ENCODE measurements at regions of chr1 and their contacts with region 1.

Region 1: GRCh38 chr1:191788551-191788950 is 369.7 kb upstream of the RGS18 start:
- DNase-seq: no peak
- H3K4me3 ChIP-seq: no peak overlapping the region
- H3K27ac ChIP-seq: no peak overlapping the region
- H3K4me1 ChIP-seq: no peaks in the 10 kb centered on the region
- H3K27me3 ChIP-seq: no peaks in the 10 kb centered on the region
- CTCF ChIP-seq: no peak
- EP300 ChIP-seq: no peak
- POLR2A ChIP-seq: no peak

Region 2: DNA sequence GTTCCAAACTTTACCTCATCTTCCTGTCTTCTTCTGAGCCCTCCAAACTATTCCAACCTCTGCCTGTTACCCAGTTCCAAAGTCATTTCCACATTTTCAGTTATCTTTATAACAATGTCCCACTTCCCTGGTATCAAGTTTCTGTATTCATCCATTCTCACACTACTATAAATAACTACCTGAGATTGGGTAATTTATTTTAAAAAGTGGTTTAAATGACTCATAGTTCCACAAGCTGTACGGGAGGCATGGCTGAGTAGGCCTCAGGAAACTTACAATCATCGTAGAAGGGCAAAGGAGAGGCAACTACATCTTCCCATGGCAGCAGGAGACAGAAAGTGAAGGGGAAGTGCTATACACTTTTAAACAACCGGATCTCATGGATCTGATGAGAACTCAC is 58.8 kb before region 1 on chr1:
- in situ Hi-C with region 1: loop called in 1 of 4 experiments (anchors 10 kb)
- intact Hi-C with region 1: no loop called
- DNase-seq: no peak
- H3K4me3 ChIP-seq: no peak overlapping the region
- H3K27ac ChIP-seq: no peak overlapping the region
- H3K4me1 ChIP-seq: no peaks in the 10 kb centered on the region
- H3K27me3 ChIP-seq: no peaks in the 10 kb centered on the region
- CTCF ChIP-seq: no peak
- EP300 ChIP-seq: no peak
- POLR2A ChIP-seq: no peak

Region 3: GRCh38 chr1:191929383-191929782 is 140.8 kb after region 1 on chr1:
- in situ Hi-C with region 1: no loop called
- intact Hi-C with region 1: no loop called
- DNase-seq: no peak
- H3K4me3 ChIP-seq: no peak overlapping the region
- H3K27ac ChIP-seq: no peak overlapping the region
- H3K4me1 ChIP-seq: no peaks in the 10 kb centered on the region
- H3K27me3 ChIP-seq: no peaks in the 10 kb centered on the region
- CTCF ChIP-seq: no peak
- EP300 ChIP-seq: no peak
- POLR2A ChIP-seq: no peak

Region 4: DNA sequence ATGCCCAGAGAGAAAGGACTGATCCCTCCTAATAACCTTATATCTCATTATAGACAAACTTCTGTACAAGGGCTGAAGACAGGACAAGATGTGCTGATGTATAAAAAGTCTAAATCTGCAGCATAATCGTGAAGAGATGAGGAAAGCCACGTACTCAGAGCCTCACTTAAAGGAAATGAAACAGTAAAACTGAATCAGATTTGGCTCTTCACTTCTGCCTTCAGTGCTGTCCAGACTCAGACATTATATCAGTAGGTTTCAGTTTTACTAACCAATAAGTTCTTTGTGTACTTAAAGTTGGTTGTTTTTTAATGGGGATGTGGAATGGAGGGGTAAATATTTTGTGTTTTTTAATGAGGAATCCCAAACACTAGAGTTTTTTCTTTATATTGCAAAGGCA is 741.7 kb after region 1 on chr1:
- in situ Hi-C with region 1: no loop called
- intact Hi-C with region 1: loop called (anchors 5 kb)
- DNase-seq: no peak
- H3K4me3 ChIP-seq: no peak overlapping the region
- H3K27ac ChIP-seq: peak overlapping the region; percentile 69 to 77 (median 76)
- H3K4me1 ChIP-seq: peaks cover 5 to 24% (median 8%) of the 10 kb centered on the region in 4 donors
- H3K27me3 ChIP-seq: no peaks in the 10 kb centered on the region
- CTCF ChIP-seq: no peak
- EP300 ChIP-seq: no peak
- POLR2A ChIP-seq: no peak